Activated naive CD4-positive, alpha-beta T cell treated with anti-CD3 and anti-CD28 coated beads for 36 hours (primary cell): ENCODE measurements at regions of chr1 and their contacts with region 1.

Region 1: DNA sequence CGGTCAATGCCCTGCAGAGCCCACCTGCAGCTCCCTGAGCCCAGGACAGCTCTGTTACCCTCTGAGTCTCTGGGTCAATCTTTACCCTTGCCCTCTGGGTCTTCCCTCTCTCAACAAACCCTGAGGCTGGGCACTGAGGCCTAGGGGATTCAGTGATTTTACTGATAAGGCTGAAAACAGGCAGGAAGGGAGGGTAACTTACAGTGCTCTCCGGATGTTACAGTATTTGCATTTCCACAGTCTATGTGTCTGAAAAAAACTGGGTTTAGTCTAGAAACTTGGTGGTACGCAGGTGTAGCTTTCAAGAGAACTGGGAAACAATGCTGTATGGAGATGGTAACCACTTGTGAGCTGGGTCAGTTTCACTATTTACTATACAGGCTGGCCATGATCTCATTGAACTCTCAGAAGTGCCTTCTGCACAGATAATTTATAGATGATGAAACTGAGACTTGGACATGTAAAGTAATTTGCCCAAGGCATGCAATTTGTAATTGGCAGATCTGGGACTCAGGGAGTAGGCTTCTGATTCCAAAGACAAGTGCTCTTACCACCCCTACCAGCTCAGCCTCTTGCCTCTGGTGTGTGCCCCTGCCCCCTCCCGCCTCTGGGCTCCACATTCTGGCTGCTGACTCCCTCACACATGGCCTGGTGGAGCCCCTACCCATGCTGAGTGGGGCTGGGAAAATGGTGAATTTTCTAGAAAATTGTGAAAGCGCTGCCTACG is 48.8 kb downstream of the TENT5C start:
- DNase-seq: no peak
- H3K4me3 Mint-ChIP-seq: no peak overlapping the region
- H3K27ac Mint-ChIP-seq: no peak overlapping the region
- H3K4me1 Mint-ChIP-seq: peaks cover 72% of the 10 kb centered on the region
- H3K27me3 Mint-ChIP-seq: peaks cover 11% of the 10 kb centered on the region

Region 2: GRCh38 chr1:117541003-117541402 is 113.7 kb before region 1 on chr1:
- CTCF ChIA-PET with region 1: interaction called, 26 read pairs
- intact Hi-C with region 1: no loop called
- DNase-seq: no peak
- H3K4me3 Mint-ChIP-seq: no peak overlapping the region
- H3K27ac Mint-ChIP-seq: no peak overlapping the region
- H3K4me1 Mint-ChIP-seq: peaks cover 19% of the 10 kb centered on the region
- H3K27me3 Mint-ChIP-seq: no peaks in the 10 kb centered on the region

Region 3: DNA sequence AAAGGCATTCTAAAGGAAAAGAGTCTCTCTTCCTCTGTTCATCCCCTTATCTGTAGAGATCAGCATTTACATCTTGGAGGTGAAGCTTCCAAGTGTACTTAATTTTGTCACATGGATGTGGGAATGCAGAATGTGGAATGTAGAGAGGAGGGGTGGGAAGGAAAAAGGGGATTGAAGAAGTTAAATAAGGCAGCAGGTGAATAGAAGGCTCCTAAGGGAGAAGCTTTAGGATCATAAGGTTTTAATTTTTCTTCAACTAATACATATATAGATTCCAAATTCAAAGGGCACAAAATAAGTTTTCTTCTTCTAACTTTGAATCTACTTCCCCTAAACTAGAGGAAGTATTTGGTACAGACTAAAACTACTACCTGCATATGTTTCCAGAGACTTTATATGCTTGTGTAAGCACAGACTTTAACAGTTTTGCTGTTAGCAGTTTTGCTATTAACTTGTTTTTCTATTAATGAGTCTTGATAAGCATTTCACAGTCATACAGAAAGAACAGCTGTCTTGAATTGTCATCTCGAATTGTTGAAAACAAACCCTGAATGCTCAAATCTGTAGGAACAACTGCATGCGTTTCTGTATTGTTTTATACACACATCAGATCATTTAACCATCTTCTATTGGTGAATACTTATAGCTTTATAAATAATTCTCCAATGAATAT is 36.1 kb before region 1 on chr1:
- CTCF ChIA-PET with region 1: no interaction called
- intact Hi-C with region 1: loop called (anchors 1 kb)
- DNase-seq: no peak
- H3K4me3 Mint-ChIP-seq: no peak overlapping the region
- H3K27ac Mint-ChIP-seq: no peak overlapping the region
- H3K4me1 Mint-ChIP-seq: peaks cover 40% of the 10 kb centered on the region
- H3K27me3 Mint-ChIP-seq: peaks cover 3% of the 10 kb centered on the region

Region 4: DNA sequence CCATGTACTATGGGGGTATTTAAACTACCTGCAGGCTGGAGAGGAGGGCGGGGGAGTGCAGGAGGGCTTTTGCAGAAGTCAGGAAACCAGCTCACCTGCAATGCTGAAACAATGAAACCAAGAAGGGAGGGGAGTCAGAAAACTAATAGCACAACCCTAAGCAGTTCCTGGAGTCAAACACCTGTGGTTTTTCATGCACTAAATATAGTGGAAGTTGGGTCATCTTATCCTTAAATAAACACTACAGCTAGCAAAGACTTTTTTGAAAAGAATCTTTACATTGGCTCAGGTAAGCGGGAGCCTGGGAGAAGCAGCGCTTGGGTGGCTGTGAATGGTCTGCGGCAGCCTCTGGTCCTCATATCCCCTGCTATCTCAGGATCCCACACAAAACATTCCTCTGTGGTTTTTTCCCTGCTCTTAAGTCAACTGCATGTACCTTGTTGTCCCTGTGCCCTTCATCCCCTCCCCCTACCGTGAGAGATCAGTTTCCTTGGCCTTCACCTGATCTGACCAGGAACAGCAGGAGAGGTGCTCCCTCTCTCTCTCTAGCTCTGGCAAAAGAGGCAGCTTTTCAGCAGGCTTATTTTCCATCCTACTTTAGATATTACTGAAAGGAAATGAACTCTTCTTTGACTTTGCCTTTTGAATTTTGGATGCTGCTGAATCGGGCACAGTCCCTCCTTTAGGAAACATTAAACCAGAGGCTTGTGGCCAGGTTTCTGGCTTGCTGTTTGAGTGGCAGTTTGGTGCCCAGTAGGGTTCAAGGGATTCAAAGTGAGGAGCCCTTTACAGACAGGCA is 22.2 kb before region 1 on chr1:
- CTCF ChIA-PET with region 1: no interaction called
- intact Hi-C with region 1: no loop called
- DNase-seq: no peak
- H3K4me3 Mint-ChIP-seq: no peak overlapping the region
- H3K27ac Mint-ChIP-seq: no peak overlapping the region
- H3K4me1 Mint-ChIP-seq: peaks cover 14% of the 10 kb centered on the region
- H3K27me3 Mint-ChIP-seq: peaks cover 10% of the 10 kb centered on the region

Region 5: DNA sequence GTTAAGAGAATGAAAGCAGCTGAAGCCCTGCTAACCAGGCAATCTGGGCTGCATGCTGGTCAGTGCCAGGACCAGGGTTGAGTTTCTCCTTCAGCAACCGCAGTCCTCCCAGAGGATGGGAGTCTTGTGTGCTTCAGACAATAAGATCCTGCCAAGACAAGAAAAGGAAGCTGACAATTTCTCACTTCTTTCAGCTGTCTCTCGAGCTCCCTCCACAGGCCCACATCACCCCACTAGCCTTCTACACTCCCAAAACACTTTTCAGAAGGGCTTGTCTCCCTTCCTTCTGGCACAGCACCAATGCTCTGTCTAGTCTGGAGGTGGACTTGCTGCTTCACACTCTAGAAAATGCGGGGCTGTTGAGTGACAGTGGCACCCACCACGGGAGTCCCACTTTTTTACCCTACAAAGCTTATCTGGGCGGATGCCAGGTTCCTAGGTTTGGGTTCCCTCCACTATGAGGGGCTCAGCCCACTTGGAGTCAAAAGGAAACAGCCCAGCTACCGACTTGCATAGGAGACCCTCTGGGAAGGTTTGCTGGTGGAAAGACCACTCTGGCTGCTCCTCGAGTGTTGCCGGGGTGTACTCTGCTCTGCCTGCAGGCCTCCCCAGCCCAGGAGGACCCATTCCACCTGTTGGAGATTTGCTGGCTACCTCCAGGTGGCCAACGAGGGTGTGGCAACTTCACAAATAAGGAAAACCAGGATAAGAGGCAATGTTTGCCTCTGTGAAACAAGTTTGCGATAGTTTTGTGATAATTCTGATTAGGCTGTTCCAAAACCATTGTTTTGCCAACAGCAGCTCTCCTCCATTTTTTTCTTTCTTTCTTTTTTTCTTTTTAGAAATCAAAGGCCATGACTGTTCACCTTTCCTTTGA is 20.1 kb after region 1 on chr1:
- CTCF ChIA-PET with region 1: interaction called, 14 read pairs
- intact Hi-C with region 1: no loop called
- DNase-seq: peak; percentile 73
- H3K4me3 Mint-ChIP-seq: no peak overlapping the region
- H3K27ac Mint-ChIP-seq: peak overlapping the region; percentile 46
- H3K4me1 Mint-ChIP-seq: peaks cover 4% of the 10 kb centered on the region
- H3K27me3 Mint-ChIP-seq: peaks cover 11% of the 10 kb centered on the region

Region 6: GRCh38 chr1:117932576-117932975 is 277.9 kb after region 1 on chr1:
- CTCF ChIA-PET with region 1: no interaction called
- intact Hi-C with region 1: no loop called
- DNase-seq: no peak
- H3K4me3 Mint-ChIP-seq: no peak overlapping the region
- H3K27ac Mint-ChIP-seq: no peak overlapping the region
- H3K4me1 Mint-ChIP-seq: peaks cover 42% of the 10 kb centered on the region
- H3K27me3 Mint-ChIP-seq: no peaks in the 10 kb centered on the region